ENCODE measurements at regions of chr2 and their contacts with region 1.

Region 1: DNA sequence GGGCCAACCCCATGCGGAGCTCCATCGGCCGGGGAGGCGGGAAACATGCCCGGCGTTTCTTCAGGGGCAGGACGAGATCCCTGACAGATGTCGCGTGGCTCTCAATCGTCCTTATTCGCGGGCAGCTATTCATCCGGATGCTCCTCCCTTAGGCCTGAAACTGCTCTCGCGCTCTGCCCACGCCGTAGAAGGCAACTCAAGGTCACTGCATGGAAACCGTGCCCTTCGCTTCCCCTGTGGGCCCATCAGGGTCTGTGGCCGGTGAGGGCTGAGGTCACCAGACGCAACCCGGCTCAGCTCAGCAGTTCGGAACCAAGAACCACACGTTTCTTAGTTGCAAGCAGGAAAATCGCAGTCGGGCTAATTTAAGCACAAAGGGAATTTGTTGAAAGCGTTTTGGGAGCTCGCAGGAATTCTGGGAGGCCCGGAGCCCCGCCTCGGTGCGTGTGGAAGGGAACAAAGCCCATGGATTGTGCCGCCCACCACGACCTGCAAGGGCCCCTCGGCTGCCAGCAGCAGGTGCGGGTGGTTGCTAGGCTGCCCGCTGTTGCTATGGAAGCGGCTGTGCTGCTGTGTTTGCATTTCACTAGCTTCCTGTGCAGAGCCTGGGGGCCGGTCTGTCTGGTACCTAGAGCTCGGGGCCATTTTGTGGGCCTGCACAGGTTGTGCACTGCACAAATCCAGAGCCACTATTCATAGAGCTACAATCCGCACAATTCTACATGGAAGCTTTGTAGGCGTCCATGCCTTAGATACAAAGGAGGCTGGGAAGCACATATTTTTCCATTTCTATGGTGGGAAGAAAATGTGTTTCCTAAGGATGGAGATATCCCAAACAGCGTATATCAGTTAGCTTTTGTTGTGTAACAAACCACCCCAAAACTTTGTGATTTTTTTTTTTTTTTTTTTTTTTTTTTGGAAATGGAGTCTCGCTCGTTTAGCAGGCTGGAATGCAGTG is 6.0 kb upstream of the ALLC start:
- DNase-seq: peak; percentile 46
- H3K4me3 ChIP-seq: no peak overlapping the region
- H3K27ac ChIP-seq: peak overlapping the region in 1 of 2 donors; percentile 30
- H3K4me1 ChIP-seq: no peaks in the 10 kb centered on the region
- H3K27me3 ChIP-seq: no peaks in the 10 kb centered on the region
- CTCF ChIP-seq: no peak
- POLR2A ChIP-seq: no peak

Region 2: GRCh38 chr2:3423492-3424175 is 228.3 kb before region 1 on chr2:
- intact Hi-C with region 1: loop called (anchors 5 kb)
- DNase-seq: peak; percentile 39
- H3K4me3 ChIP-seq: no peak overlapping the region
- H3K27ac ChIP-seq: no peak overlapping the region
- H3K4me1 ChIP-seq: no peaks in the 10 kb centered on the region
- H3K27me3 ChIP-seq: no peaks in the 10 kb centered on the region
- CTCF ChIP-seq: peak; percentile 78 to 98 (median 88)
- POLR2A ChIP-seq: no peak